ENCODE measurements at regions of chr5 and their contacts with region 1.

Region 1: GRCh38 chr5:16552666-16553343 is 64.0 kb downstream of the RETREG1 start:
- DNase-seq: peak; percentile 44 to 84
- H3K4me3 ChIP-seq: no peak overlapping the region
- H3K27ac ChIP-seq: no peak overlapping the region
- H3K4me1 ChIP-seq: no peaks in the 10 kb centered on the region
- H3K27me3 ChIP-seq: no peaks in the 10 kb centered on the region
- CTCF ChIP-seq: peak; percentile 80 to 90 (median 89)
- EP300 ChIP-seq: no peak
- POLR2A ChIP-seq: no peak
- RAD21 ChIP-seq: peak; percentile 66 to 78

Region 2: DNA sequence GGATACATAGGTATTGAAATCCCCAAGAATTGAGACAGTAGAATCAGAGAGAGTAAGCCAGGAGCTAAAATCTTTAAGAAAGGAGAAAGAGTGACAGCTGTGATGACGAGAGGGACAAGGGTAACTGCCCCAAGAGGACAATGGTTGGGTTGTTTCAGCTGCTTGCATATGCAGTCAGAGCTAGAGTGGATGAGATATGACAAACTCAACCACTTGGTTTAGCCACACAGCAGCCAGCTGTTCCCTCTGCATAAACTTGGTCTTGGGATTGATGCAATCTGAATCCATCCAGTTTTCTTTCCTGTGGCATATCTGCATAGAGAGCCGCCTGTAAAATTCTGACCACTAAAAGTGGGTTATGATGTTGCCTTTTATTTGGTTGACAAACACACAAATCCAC is 187.9 kb before region 1 on chr5:
- CTCF ChIA-PET with region 1: no interaction called
- POLR2A ChIA-PET with region 1: no interaction called
- DNase-seq: no peak
- H3K4me3 ChIP-seq: no peak overlapping the region
- H3K27ac ChIP-seq: no peak overlapping the region
- H3K4me1 ChIP-seq: no peaks in the 10 kb centered on the region
- H3K27me3 ChIP-seq: no peaks in the 10 kb centered on the region
- CTCF ChIP-seq: no peak
- EP300 ChIP-seq: no peak
- POLR2A ChIP-seq: no peak
- RAD21 ChIP-seq: no peak

Region 3: GRCh38 chr5:16489322-16489791 is 63.4 kb before region 1 on chr5:
- CTCF ChIA-PET with region 1: interaction called, 155 read pairs
- POLR2A ChIA-PET with region 1: no interaction called
- DNase-seq: no peak
- H3K4me3 ChIP-seq: no peak overlapping the region
- H3K27ac ChIP-seq: no peak overlapping the region
- H3K4me1 ChIP-seq: no peaks in the 10 kb centered on the region
- H3K27me3 ChIP-seq: no peaks in the 10 kb centered on the region
- CTCF ChIP-seq: peak in 2 of 3 experiments; percentile 53 to 63; a peak in 2 of 4 replicates
- EP300 ChIP-seq: no peak
- POLR2A ChIP-seq: no peak
- RAD21 ChIP-seq: peak; percentile 84 to 86

Region 4: GRCh38 chr5:16565118-16565517 is 12.3 kb after region 1 on chr5:
- CTCF ChIA-PET with region 1: interaction called, 40 read pairs
- POLR2A ChIA-PET with region 1: no interaction called
- DNase-seq: no peak
- H3K4me3 ChIP-seq: no peak overlapping the region
- H3K27ac ChIP-seq: no peak overlapping the region
- H3K4me1 ChIP-seq: 0 out of 7 replicates have a peak, but pooled peaks cover 0 to 2% (median 0%) of the 10 kb centered on the region in 4 experiments
- H3K27me3 ChIP-seq: no peaks in the 10 kb centered on the region
- CTCF ChIP-seq: no peak
- EP300 ChIP-seq: no peak
- POLR2A ChIP-seq: no peak
- RAD21 ChIP-seq: no peak

Region 5: DNA sequence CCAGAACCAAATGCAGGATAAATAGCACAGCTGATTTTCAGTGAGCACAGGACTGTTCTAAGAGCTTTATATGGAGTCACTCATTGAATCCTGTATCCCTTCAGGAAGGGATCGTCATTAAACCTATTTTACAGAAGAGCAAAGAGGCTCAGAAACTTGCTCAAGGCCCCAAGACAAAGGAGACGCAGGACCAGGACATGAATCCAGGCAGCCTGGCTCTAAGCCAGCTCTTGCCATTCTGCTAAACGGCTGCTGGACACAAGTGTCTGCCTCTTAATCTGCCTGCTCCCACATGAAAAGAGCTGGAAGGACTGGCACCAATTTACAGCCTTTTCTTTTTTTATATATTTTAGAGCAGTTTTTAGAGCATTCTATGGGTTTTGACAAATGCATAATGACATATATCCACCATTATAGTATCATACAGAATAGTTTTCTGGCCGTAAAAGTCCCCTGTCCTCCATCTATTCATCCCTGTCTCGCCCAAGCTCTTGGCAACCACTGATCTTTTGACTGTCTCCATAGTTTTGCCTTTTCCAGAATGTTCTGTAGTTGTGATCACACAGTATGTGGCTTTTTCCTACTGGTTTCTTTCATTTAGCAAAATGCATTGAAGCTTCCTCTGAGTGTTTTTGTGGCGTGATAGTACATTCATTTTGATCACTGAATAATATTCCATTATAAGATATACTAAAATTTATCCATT is 26.5 kb after region 1 on chr5:
- CTCF ChIA-PET with region 1: interaction called, 25 read pairs
- POLR2A ChIA-PET with region 1: interaction called, 3 read pairs
- DNase-seq: no peak
- H3K4me3 ChIP-seq: no peak overlapping the region
- H3K27ac ChIP-seq: no peak overlapping the region
- H3K4me1 ChIP-seq: peaks cover 1 to 13% (median 9%) of the 10 kb centered on the region in 4 experiments; a peak in 5 of 7 replicates
- H3K27me3 ChIP-seq: no peaks in the 10 kb centered on the region; a peak in 1 of 7 replicates
- CTCF ChIP-seq: no peak
- EP300 ChIP-seq: no peak
- POLR2A ChIP-seq: no peak
- RAD21 ChIP-seq: no peak

Region 6: GRCh38 chr5:16666883-16667398 is 114.1 kb after region 1 on chr5:
- CTCF ChIA-PET with region 1: interaction called, 24 read pairs
- POLR2A ChIA-PET with region 1: no interaction called
- DNase-seq: no peak
- H3K4me3 ChIP-seq: no peak overlapping the region
- H3K27ac ChIP-seq: no peak overlapping the region
- H3K4me1 ChIP-seq: no peaks in the 10 kb centered on the region
- H3K27me3 ChIP-seq: no peaks in the 10 kb centered on the region
- CTCF ChIP-seq: peak; percentile 18 to 59 (median 36)
- EP300 ChIP-seq: no peak
- POLR2A ChIP-seq: 0 out of 3 replicates have a peak, but pooled peaks of 1 of the 2 experiments have one; percentile 18
- RAD21 ChIP-seq: peak; percentile 55 to 62

Region 7: GRCh38 chr5:16679863-16680262 is 127.1 kb after region 1 on chr5:
- CTCF ChIA-PET with region 1: no interaction called
- POLR2A ChIA-PET with region 1: no interaction called
- DNase-seq: peak in 1 of 2 experiments; percentile 65
- H3K4me3 ChIP-seq: no peak overlapping the region
- H3K27ac ChIP-seq: no peak overlapping the region
- H3K4me1 ChIP-seq: no peaks in the 10 kb centered on the region
- H3K27me3 ChIP-seq: no peaks in the 10 kb centered on the region
- CTCF ChIP-seq: peak; percentile 36 to 67 (median 61)
- EP300 ChIP-seq: no peak
- POLR2A ChIP-seq: no peak
- RAD21 ChIP-seq: peak; percentile 49 to 52

Measured in H1 (cell line).